Heart right ventricle (tissue), 16 donors: ENCODE measurements at regions of chr11 and their contacts with region 1.

Region 1: DNA sequence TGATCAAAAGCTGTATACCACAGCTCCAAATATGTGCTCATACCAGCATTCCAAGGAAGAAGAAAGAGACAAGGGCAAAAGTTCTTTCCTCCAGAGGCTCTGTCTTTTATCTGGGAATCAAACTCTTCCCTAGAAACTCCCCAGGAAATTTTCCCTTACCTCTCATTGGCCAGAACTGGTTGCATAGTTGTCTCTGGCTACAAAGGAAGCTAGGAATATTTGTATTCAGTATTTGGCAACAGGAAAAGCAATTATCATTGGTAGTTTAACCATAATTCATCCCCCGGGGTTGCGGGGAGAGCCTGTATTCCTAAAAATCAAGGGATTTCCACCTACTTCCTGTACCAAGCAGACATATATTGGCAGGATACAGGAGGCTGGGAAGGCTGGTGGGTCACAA is 10.5 kb upstream of the ZFTA start:
- DNase-seq: no peak
- ATAC-seq: no peak
- H3K4me3 ChIP-seq: no peak overlapping the region
- H3K27ac ChIP-seq: peak overlapping the region in 1 of 10 donors; percentile 0
- H3K4me1 ChIP-seq: peaks cover 0 to 12% (median 0%) of the 10 kb centered on the region in 9 donors
- H3K27me3 ChIP-seq: no peaks in the 10 kb centered on the region
- CTCF ChIP-seq: no peak

Region 2: DNA sequence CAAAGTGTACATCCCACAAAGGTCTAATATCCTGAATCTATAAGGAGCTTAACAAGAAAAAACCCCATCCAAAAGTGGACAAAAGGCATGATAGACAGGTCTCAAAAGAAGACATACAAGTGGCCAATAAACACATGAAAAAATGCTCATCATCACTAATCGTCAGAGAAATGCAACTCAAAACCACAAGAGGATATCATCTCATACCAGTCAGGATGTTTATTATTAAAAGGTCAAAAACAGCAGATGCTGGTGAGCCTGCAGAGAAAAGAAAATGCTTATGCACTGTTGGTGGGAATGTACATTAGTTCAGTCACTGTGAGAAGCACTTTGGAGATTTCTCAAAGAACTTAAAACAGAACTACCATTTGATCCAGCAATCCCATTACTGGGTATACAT is 260.5 kb before region 1 on chr11:
- intact Hi-C with region 1: no loop called
- DNase-seq: no peak
- ATAC-seq: no peak
- H3K4me3 ChIP-seq: no peak overlapping the region
- H3K27ac ChIP-seq: peak overlapping the region in 1 of 10 donors; percentile 3
- H3K4me1 ChIP-seq: no peaks in the 10 kb centered on the region
- H3K27me3 ChIP-seq: no peaks in the 10 kb centered on the region
- CTCF ChIP-seq: no peak

Region 3: GRCh38 chr11:63813035-63813562 is 34.1 kb after region 1 on chr11 and contains the start of gene SPINDOC:
- intact Hi-C with region 1: loop called in 2 of 10 experiments (anchors 5 kb)
- DNase-seq: peak; percentile 81 to 83
- ATAC-seq: peak; percentile 87 to 95 (median 93)
- H3K4me3 ChIP-seq: peak within 1 kb of the TSS; percentile 76 to 100 (median 96)
- H3K27ac ChIP-seq: peak within 1 kb of the TSS; percentile 35 to 93 (median 82)
- H3K4me1 ChIP-seq: peaks cover 0 to 38% (median 22%) of the 10 kb centered on the region in 9 donors
- H3K27me3 ChIP-seq: no peaks in the 10 kb centered on the region
- CTCF ChIP-seq: no peak
- total RNA-seq, gene SPINDOC: 7.0 to 13.2 (median 9.9) TPM